Activated CD4-positive, alpha-beta T cell treated with anti-CD3 and anti-CD28 coated beads, Interleukin-2, amount 10 ng/mL, durations not matched to agents 24 days and 14 days (primary cell): ENCODE measurements at regions of chr17 and their contacts with region 1.

Region 1: GRCh38 chr17:34146440-34147043 is 108.5 kb upstream of the CCL2 start:
- DNase-seq: peak; percentile 89
- H3K4me3 Mint-ChIP-seq: no peak overlapping the region
- H3K27ac Mint-ChIP-seq: no peak overlapping the region
- H3K4me1 Mint-ChIP-seq: no peaks in the 10 kb centered on the region
- H3K27me3 Mint-ChIP-seq: peaks cover 6% of the 10 kb centered on the region

Region 2: DNA sequence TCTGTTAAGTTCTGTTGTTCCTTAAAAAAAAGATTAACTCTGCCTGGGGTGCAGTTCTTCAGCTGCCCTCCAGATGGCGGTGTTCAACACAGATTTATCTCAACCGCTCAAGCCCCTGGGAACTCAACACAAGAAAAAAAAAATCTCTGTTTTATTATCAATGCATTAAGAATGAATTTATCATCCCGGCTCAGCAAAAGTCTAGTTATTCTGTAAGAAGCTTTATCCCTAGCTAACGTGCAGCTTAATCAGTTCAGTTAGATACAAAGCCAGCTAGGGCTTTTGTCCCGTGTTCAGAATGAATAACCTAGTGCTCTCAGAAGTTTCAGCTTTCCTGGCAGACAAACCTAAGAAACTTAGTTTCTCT is 367.3 kb before region 1 on chr17:
- intact Hi-C with region 1: loop called (anchors 1 kb)
- DNase-seq: peak; percentile 77
- H3K4me3 Mint-ChIP-seq: no peak overlapping the region
- H3K27ac Mint-ChIP-seq: no peak overlapping the region
- H3K4me1 Mint-ChIP-seq: no peaks in the 10 kb centered on the region
- H3K27me3 Mint-ChIP-seq: no peaks in the 10 kb centered on the region

Region 3: GRCh38 chr17:33847900-33848299 is 298.6 kb before region 1 on chr17:
- intact Hi-C with region 1: no loop called
- DNase-seq: no peak
- H3K4me3 Mint-ChIP-seq: no peak overlapping the region
- H3K27ac Mint-ChIP-seq: no peak overlapping the region
- H3K4me1 Mint-ChIP-seq: no peaks in the 10 kb centered on the region
- H3K27me3 Mint-ChIP-seq: no peaks in the 10 kb centered on the region

Region 4: GRCh38 chr17:33927732-33928133 is 218.8 kb before region 1 on chr17:
- intact Hi-C with region 1: loop called (anchors 10 kb)
- DNase-seq: no peak
- H3K4me3 Mint-ChIP-seq: no peak overlapping the region
- H3K27ac Mint-ChIP-seq: no peak overlapping the region
- H3K4me1 Mint-ChIP-seq: no peaks in the 10 kb centered on the region
- H3K27me3 Mint-ChIP-seq: no peaks in the 10 kb centered on the region